HAP-1 (cell line): ENCODE measurements at regions of chr4 and their contacts with region 1.

Region 1: DNA sequence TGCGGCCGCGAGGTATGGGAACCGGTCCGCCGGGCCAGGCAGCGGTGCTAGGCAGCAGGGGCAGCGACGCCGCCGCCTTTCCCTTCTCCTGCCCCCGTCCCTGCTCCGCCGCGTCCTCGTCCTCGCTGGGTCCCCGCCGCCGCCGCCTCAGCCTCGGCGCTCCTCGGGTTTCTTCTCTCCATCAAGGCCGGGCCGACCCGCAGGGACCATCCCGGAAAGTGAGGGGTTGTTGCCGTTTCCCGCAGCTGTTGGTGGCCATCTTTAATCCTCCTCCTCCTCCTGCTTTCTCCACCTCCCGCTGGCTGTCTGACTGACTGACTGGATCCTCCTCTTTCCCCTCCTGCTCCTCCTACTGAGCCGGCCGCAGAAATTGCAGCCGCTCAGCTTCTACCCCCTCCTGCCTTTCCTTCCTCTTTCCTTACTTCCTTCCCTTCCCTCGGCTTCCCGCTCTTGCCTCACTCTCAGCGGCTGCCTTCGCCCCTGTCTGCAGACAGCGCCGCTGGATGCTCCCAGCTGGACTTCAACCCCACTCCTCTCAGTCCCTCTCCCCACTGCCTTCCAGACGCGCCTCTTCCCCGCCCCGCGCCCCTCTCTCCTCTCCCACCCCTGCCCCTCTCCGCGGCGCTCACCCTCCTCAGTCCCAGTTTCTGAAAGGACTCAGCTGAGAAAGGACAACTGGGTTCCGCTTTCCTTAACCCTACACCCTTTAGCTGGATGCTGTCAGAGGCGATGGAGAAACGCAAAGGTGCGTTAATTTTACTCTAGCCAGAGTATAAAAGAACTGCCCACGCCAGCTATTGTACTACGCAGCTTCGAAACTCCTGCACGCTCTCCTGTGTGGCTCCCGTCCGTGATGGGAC is at the start of gene WDFY3:
- DNase-seq: peak; percentile 89 to 95
- H3K4me3 ChIP-seq: peak within 1 kb of the TSS; percentile 72
- H3K4me1 ChIP-seq: peaks cover 42% of the 10 kb centered on the region
- H3K27me3 ChIP-seq: no peaks in the 10 kb centered on the region

Region 2: DNA sequence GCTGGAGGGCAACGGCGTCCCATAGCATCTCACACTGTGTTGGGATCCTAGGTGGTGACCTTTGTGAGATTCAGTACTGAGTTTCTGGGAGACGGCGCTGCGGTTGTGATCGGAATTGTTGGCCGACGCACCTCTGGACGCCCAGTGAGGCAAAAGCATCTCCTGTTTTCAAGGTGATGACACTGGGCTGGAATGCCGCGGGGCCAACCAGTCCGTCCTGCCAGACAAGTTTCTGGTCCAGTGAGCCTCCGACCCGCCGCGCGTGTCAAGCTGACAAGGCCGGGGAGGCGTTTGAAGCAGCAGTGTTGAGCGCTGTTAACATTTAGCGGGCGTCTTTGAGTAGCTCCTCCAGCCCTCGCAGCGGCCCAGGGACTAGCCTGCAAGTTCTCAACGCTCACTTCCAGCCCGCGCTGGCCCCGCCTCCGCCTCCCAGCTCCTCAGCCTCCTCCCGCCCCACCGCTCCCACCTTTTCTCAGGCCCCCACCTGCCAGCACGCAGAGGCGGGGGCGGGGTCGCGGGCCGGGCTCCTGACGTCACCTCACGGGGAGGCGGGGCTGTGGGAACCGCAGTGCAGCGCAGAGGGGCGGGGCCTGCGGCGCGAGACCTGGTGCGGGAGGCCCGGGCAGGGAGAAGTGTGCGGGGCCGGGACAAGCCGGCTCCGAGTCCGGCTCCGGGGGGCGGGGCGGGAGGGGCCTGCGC is 384.2 kb before region 1 on chr4:
- in situ Hi-C with region 1: loop called (anchors 10 kb)
- DNase-seq: peak; percentile 90 to 99
- H3K4me3 ChIP-seq: peak overlapping the region; percentile 67
- H3K4me1 ChIP-seq: peaks cover 26% of the 10 kb centered on the region
- H3K27me3 ChIP-seq: no peaks in the 10 kb centered on the region

Region 3: DNA sequence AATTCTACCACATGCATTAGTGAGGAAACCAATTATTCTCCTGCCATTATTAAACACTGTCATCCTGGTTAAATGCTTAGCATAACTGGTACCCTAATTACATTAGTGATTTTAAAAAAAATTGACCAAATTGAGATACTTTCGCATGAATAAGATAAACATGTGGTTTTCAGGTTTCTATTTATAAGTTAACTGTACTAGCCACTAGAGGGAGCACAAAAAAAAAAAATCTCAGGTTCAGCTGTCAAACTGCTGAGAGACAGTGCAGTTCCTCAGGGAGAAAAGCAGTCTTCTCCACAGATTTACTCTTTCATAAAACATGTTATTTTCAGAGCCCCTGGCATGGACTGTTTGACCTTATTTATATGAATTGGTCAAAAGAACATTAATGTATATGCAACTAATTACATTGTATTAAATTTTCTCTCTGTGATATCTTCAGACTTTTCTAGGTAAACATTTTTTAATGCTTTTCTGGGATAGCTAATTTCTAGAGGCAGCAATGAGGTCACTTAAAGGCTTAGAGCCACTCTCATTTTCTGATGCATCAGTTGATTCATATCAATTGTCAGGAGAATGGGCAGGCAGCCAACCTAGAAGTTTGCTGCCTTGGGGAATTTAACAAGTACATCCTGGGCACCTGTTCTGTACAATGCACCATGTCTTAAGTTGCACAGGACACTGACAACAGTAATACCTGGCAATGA is 216.2 kb before region 1 on chr4:
- in situ Hi-C with region 1: loop called (anchors 10 kb)
- DNase-seq: peak in 1 of 2 experiments; percentile 60
- H3K4me3 ChIP-seq: no peak overlapping the region
- H3K4me1 ChIP-seq: no peaks in the 10 kb centered on the region
- H3K27me3 ChIP-seq: no peaks in the 10 kb centered on the region